Breast epithelium (tissue), 4 donors: ENCODE measurements at regions of chr15 and their contacts with region 1.

Region 1: GRCh38 chr15:38103564-38103963 is 149.1 kb upstream of the SPRED1 start:
- DNase-seq: no peak
- H3K4me3 ChIP-seq: no peak overlapping the region
- H3K27ac ChIP-seq: no peak overlapping the region
- H3K4me1 ChIP-seq: no peaks in the 10 kb centered on the region
- H3K27me3 ChIP-seq: no peaks in the 10 kb centered on the region
- CTCF ChIP-seq: no peak
- POLR2A ChIP-seq: no peak

Region 2: DNA sequence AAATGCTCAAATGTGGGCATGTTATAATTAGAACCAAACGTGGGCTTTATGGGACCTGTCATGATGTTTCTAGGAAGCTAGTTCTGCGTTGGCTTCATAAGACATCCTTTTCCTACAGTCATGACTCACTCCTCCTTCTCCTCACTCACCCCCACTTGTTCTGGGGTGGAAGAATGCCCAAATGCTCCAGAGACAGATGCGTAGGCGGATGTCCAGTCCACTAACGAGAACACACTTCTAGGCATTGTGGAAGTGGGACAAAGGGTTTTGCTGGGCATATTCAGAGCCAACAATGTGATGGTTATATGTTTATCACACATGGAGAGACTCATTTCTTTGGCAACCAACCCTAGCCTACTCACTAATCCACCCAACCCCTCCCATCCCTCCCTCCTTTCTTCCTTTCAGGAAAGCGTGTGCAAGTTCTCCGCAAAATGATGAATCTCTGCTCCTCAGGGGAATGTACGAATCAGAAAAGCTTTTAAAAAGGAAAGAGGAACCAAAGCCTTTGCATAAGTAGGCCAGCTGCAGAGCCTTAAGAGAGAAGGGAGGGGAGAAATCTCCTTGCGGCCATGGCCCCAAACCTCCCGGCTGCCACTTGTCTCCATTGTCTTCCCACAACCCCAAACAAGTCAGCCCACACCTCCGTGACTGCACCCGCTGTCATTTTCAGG is 26.1 kb after region 1 on chr15:
- intact Hi-C with region 1: no loop called
- DNase-seq: peak in 1 of 2 donors; percentile 84
- H3K4me3 ChIP-seq: peak overlapping the region; percentile 14 to 54 (median 28)
- H3K27ac ChIP-seq: peak overlapping the region; percentile 78 to 90
- H3K4me1 ChIP-seq: no peaks in the 10 kb centered on the region
- H3K27me3 ChIP-seq: no peaks in the 10 kb centered on the region
- CTCF ChIP-seq: no peak
- POLR2A ChIP-seq: no peak

Region 3: DNA sequence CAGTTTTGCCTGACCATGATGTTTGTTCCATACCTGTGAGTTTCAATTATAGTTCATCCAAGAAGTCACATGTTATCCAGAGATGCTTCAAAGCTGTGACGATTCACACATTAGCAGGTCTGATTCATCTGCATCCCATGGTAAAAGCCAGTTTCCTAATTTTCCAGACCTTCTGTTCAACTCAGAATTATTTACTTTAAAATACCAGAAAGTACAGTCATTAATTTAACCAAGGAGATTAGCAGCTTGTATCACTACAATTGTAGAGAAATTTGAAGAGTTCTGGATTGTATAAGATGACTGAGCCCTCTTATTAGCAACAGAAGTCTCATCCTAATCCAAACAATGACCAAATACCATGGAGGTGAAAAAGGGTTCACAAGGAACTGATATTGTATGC is 1401.2 kb after region 1 on chr15:
- intact Hi-C with region 1: no loop called
- DNase-seq: no peak
- H3K4me3 ChIP-seq: no peak overlapping the region
- H3K27ac ChIP-seq: peak overlapping the region; percentile 3 to 83
- H3K4me1 ChIP-seq: no peaks in the 10 kb centered on the region
- H3K27me3 ChIP-seq: no peaks in the 10 kb centered on the region
- CTCF ChIP-seq: no peak
- POLR2A ChIP-seq: no peak

Region 4: GRCh38 chr15:39642011-39642640 is 1538.6 kb after region 1 on chr15:
- intact Hi-C with region 1: loop called (anchors 5 kb)
- DNase-seq: no peak
- H3K4me3 ChIP-seq: no peak overlapping the region
- H3K27ac ChIP-seq: no peak overlapping the region
- H3K4me1 ChIP-seq: no peaks in the 10 kb centered on the region
- H3K27me3 ChIP-seq: no peaks in the 10 kb centered on the region
- CTCF ChIP-seq: no peak
- POLR2A ChIP-seq: no peak